Left cardiac atrium (tissue), 4 donors: ENCODE measurements at regions of chr21 and their contacts with region 1.

Region 1: GRCh38 chr21:41068967-41069642 is 98.9 kb upstream of the BACE2 start:
- DNase-seq: peak; percentile 88
- ATAC-seq: peak; percentile 89 to 94

Region 2: DNA sequence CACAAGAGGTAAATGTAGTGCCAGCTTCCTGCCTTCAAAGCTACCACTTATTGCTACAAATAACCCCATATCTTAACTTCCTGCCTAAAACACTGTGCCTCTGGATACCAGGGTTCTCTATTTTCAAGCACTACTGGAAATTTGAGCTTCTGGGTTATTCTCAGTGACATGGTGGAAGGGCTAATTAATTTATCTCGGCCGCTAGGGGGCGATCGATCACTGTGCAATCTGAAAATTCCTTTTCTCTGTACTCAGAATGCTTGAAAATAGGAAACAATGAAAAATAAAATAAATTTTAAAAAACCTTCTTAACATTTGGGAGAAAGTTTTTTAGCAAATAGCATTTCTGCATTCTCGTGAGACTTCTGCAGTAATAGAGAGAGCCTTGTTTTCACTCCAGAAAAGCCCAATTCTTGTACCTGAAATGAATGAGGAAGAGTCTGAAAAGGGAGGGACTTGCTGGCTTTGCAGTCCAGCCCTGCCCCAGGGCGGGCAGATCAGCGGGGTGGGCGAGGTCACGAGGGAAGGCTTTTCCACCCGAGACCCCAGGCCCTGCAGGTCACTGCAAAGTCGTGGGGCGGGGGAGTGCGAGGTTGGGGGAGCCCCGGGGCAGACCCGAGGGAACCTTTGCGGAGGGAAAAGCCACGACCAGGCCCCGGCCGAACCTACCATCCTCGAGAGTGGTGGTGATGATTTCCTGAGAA is 925.1 kb before region 1 on chr21:
- intact Hi-C with region 1: loop called in 1 of 2 experiments (anchors 5 kb)
- DNase-seq: peak; percentile 38
- ATAC-seq: peak in 1 of 2 donors; percentile 49

Region 3: GRCh38 chr21:40151611-40152010 is 917.5 kb before region 1 on chr21:
- intact Hi-C with region 1: loop called (anchors 5 to 10 kb)
- DNase-seq: no peak
- ATAC-seq: no peak

Region 4: DNA sequence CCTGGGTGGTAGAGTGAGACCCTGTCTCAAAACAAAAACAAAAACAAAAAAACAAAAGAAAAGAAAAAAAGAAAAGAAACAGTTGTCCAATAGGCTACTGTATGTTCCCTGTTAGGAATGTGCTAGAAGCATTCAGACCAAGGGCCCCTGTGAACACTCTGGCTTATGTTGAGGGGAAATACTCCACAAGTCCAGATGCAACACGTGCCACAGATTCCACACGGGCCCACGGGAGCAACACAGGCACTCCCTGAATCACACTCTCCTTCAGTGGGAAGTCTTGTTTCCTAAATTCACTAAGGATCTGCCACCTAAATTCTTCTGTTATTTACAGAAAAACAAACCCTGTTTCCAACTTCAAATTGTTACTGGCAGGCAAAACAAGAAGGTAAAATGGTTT is 910.7 kb before region 1 on chr21:
- intact Hi-C with region 1: loop called (anchors 5 to 10 kb)
- DNase-seq: no peak
- ATAC-seq: no peak

Region 5: DNA sequence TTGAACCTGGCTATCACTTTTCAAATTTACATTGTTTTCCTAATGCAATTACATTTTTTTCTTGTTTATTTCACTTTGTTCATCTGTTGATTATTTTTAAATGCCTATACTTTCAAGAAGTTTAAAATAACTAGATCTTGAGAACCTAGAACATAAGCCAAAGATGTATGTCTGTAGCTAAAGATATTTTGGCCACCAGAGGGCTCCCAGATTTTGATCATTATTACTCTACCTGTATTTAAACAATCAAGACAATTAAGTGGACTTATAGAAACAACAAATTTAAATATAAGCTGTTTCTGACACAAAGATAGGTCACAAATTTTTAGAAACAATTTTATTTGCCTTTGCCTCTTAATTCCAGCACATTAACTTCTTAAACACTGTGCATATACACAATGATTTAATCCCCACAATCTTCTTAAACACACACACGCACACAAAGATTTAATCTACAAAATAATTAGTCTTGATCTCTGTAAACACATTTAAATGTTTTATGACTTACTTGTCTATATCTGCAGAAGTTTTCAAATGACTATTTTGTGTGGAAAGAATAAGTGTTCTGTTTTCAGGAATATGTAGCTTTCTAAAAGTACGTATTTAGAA is 602.1 kb before region 1 on chr21:
- intact Hi-C with region 1: loop called (anchors 2 to 10 kb)
- DNase-seq: no peak
- ATAC-seq: no peak

Region 6: GRCh38 chr21:40936771-40937261 is 132.3 kb before region 1 on chr21:
- intact Hi-C with region 1: no loop called
- DNase-seq: no peak
- ATAC-seq: no peak